ENCODE measurements at regions of chr1 and their contacts with region 1.

Region 1: DNA sequence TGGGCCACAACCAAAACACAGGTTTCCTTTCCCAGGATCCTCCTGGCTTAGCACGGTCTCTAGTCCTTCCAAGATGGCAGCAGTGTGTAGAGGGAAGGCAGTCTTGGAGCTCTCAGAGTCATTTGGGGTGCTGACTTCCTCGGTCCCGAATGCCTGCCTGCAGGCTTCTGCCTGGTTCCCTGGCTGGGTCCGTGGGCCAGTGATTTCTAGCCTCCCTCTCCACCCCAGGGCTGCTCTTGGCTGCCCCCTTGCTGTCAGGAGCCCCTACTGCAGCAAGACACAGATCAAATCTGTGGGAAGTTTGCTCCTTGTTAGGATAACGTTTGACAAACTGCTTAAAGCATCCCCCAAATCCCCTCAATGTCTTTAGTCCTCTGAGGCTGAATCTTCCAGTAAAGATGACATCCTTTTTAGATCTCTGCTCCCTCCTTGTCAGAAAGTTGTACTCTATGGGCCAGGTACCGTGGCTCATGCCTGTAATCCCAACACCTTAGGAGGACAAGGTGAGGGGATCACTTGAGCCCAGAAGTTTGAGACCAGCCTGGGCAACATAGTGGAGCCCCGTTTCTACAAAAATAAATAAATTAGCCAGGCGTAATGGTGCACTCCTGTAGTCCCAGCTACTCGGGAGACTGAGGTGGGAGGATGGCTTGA is 272.5 kb downstream of the RRAGC start:
- DNase-seq: peak; percentile 68
- H3K4me3 Mint-ChIP-seq: no peak overlapping the region
- H3K27ac Mint-ChIP-seq: no peak overlapping the region
- H3K4me1 Mint-ChIP-seq: peaks cover 13% of the 10 kb centered on the region
- H3K27me3 Mint-ChIP-seq: peaks cover 3% of the 10 kb centered on the region

Region 2: DNA sequence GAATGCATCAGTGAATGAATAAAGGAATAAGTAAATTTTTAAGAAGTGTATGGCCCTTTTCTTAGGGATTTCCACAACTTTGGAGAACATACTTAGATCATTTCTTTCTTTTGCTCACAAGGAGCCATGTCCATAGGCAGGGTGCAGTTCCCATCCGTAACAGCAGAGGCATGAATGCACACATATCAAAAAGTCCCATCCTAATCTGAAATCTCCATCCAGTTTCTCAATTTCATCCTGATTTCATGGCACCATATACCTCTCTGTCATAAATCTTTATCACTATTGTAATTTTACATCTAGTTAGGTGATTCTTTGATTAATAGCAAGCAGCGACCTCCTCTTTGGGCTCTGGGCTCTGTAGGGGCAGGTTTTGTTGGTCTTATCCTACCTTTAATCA is 86.8 kb before region 1 on chr1:
- CTCF ChIA-PET with region 1: interaction called, 3 read pairs
- intact Hi-C with region 1: loop called (anchors 5 kb)
- DNase-seq: peak; percentile 16
- H3K4me3 Mint-ChIP-seq: no peak overlapping the region
- H3K27ac Mint-ChIP-seq: no peak overlapping the region
- H3K4me1 Mint-ChIP-seq: peaks cover 5% of the 10 kb centered on the region
- H3K27me3 Mint-ChIP-seq: peaks cover 11% of the 10 kb centered on the region

Region 3: GRCh38 chr1:38758820-38759219 is 171.7 kb after region 1 on chr1:
- CTCF ChIA-PET with region 1: no interaction called
- intact Hi-C with region 1: no loop called
- DNase-seq: no peak
- H3K4me3 Mint-ChIP-seq: no peak overlapping the region
- H3K27ac Mint-ChIP-seq: no peak overlapping the region
- H3K4me1 Mint-ChIP-seq: no peaks in the 10 kb centered on the region
- H3K27me3 Mint-ChIP-seq: peaks cover 7% of the 10 kb centered on the region